Activated T-helper 1 cell treated with anti-CD3 and anti-CD28 coated beads, Interleukin-12 subunit alpha, Interleukin-12 subunit beta, Interleukin-2, Interleukin-4 antibody, amounts not matched to agents 30 ng/mL and 10 ng/mL and 1 ng/mL, durations not matched to agents 14 hours and 24 hours and 36 hours (primary cell): ENCODE measurements at regions of chr5 and their contacts with region 1.

Region 1: DNA sequence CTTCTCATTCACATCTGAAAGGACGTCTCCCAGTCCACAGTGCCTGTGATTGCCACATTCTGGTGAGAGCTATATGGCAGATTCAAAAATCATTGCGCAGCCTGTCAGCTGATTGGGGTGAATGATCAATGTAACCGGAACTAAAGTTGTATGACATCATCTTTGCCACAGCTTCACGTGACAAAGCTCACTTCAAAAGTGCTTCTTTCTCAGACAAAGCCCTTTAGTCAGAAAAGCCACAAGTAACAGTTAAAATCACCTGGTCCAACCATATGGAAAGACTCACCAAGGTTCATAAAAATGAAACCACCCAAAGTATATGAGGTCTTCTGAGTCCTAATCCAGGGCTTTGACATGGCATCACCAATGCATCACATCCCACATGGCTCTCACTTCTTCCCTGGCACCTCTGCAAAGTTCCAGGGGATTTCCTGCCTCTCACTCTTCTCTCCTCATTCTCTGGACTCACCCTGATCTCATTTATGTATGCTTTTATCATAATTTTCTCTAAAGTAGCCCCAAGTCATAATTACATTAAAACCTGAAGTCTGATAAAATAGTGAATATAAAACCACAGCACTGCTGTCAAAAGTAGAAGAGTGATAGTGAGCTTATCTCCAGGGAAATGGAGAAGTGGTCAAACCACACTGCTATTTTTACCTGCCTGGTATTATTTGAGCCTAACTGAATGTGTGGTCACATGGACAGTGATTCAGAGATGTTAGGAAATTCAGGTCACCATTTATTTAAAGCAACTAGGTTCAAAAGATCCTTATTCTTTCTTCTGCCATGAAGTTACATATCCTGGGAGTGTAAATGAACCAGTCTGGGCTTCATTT is 193.1 kb upstream of the PTGER4 start:
- DNase-seq: peak; percentile 63
- H3K4me3 Mint-ChIP-seq: peak overlapping the region; percentile 23
- H3K27ac Mint-ChIP-seq: peak overlapping the region; percentile 83
- H3K4me1 Mint-ChIP-seq: peaks cover 79% of the 10 kb centered on the region
- H3K27me3 Mint-ChIP-seq: no peaks in the 10 kb centered on the region

Region 2: GRCh38 chr5:39177631-39177964 is 1309.1 kb before region 1 on chr5:
- intact Hi-C with region 1: loop called (anchors 10 kb)
- DNase-seq: no peak
- H3K4me3 Mint-ChIP-seq: peak overlapping the region; percentile 78
- H3K27ac Mint-ChIP-seq: peak overlapping the region; percentile 77
- H3K4me1 Mint-ChIP-seq: peaks cover 89% of the 10 kb centered on the region
- H3K27me3 Mint-ChIP-seq: no peaks in the 10 kb centered on the region

Region 3: GRCh38 chr5:40171971-40172370 is 314.7 kb before region 1 on chr5:
- intact Hi-C with region 1: loop called (anchors 5 kb)
- DNase-seq: no peak
- H3K4me3 Mint-ChIP-seq: no peak overlapping the region
- H3K27ac Mint-ChIP-seq: no peak overlapping the region
- H3K4me1 Mint-ChIP-seq: peaks cover 8% of the 10 kb centered on the region
- H3K27me3 Mint-ChIP-seq: no peaks in the 10 kb centered on the region

Region 4: DNA sequence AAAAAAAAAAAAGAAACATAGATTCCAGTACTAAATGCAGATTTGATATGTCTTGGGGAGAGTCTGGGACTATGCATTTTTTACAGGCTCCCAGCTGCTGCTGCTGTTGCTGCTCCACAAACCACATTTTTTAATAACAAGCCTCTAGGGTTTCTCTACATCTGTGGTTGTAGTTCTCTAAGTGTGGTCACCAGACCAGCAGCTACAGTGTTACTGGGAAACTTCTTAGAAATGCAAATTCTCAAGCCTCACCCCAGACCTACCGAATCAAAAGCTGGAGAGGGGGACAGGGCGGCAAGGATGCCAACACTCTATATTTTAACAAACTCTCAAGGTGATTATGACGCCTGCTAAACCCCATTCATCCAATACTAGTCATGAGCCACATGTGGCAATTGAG is 100.4 kb before region 1 on chr5:
- intact Hi-C with region 1: loop called (anchors 1 kb)
- DNase-seq: peak; percentile 19
- H3K4me3 Mint-ChIP-seq: no peak overlapping the region
- H3K27ac Mint-ChIP-seq: peak overlapping the region; percentile 19
- H3K4me1 Mint-ChIP-seq: peaks cover 88% of the 10 kb centered on the region
- H3K27me3 Mint-ChIP-seq: no peaks in the 10 kb centered on the region

Region 5: DNA sequence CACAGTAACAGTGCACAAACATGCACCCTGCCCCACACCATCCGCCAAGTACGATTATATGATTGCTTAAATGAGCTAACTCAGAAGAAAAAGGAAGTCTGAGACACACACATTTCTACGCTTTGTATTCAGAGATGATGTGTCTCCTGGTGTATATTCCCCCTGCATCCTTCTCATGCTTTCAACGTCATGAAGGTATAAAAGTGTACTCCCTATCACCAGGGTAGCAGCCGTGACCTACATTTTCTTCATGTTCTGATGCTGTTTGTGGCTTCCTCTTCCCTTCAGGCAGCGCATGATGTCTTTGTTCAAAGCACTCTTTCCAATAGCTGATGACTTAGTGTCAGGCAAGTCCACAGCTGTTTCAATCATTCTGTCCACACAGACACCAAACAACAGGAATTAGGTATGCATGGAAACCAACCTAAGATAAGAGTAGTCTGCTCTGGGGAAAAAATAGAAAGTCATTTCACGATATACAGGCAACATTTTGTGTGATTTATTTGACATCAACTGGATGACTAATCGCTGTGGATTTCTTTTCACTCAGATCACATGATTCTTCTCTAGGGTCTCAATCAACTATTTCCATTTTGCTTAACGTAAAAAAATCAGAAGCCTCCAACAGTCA is 76.3 kb before region 1 on chr5:
- intact Hi-C with region 1: loop called (anchors 1 kb)
- DNase-seq: peak; percentile 76
- H3K4me3 Mint-ChIP-seq: peak overlapping the region; percentile 72
- H3K27ac Mint-ChIP-seq: peak overlapping the region; percentile 95
- H3K4me1 Mint-ChIP-seq: peaks cover 70% of the 10 kb centered on the region
- H3K27me3 Mint-ChIP-seq: no peaks in the 10 kb centered on the region

Region 6: DNA sequence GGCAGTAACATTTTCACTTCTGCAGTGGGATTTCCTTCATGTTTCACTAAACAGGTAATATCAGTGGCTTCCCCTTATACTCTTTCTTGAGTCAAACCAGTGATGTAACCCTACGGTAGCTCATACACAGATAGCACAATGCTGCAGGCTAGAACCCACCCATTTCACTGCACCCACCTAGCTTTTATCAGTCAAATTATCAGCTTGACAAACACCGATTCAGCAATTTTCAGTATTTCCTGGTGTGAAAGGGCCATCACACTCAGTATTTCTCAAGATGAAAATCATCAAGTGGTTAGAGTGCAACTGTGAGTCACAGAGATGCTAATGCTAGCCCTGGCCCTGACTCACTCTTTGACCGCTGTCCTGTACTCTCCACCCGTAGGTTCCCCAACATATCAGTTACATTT is 49.2 kb before region 1 on chr5:
- intact Hi-C with region 1: loop called (anchors 1 kb)
- DNase-seq: no peak
- H3K4me3 Mint-ChIP-seq: peak overlapping the region; percentile 13
- H3K27ac Mint-ChIP-seq: peak overlapping the region; percentile 71
- H3K4me1 Mint-ChIP-seq: peaks cover 84% of the 10 kb centered on the region
- H3K27me3 Mint-ChIP-seq: no peaks in the 10 kb centered on the region

Region 7: GRCh38 chr5:40475561-40475960 is 11.1 kb before region 1 on chr5:
- intact Hi-C with region 1: no loop called
- DNase-seq: no peak
- H3K4me3 Mint-ChIP-seq: no peak overlapping the region
- H3K27ac Mint-ChIP-seq: no peak overlapping the region
- H3K4me1 Mint-ChIP-seq: peaks cover 9% of the 10 kb centered on the region
- H3K27me3 Mint-ChIP-seq: peaks cover 2% of the 10 kb centered on the region

Region 8: DNA sequence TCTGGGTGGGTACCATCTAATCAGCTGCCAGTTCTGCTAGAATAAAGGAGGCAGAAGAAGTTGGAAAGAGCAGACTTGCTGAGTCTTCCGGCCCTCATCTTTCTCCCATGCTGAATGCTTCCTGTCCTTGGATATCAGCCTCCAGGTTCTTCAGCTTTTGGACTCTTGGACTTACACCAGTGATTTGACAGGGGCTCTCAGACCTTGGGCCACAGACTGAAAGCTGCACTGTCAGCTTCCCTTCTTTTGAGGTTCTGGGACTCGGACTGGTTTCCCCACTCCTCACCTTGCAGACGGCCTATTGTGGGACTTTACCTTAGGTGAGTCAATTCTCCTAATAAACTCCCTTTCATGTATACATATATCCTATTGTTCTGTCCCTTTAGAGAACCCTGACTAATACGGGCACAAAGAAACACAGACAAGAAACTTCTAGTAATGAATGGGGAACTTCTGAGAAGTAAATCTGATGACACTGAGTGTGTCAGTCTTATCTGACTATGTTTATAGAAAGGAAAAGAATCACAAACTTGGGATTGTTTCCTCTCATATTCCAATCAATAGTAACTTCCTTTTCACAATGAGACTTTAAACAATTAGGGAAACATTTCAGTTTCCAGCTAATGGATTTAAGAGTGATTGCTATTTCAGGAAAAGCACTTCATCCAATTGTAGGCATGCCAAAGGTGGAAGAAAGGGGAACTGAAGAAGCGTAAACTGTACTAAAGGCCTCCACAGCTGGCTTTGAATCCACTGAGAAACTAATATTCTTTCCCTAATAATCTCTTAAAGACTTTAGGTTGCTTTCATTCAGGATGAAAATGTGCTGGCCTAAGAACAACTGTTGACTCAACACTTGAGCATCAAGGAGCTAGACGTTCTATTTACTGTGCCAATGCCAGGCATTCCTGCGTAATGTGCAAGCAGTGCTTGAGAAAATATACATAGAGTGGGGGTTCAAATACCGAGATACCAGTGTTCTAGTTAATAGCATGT is 65.1 kb after region 1 on chr5:
- intact Hi-C with region 1: no loop called
- DNase-seq: no peak
- H3K4me3 Mint-ChIP-seq: no peak overlapping the region
- H3K27ac Mint-ChIP-seq: no peak overlapping the region
- H3K4me1 Mint-ChIP-seq: peaks cover 15% of the 10 kb centered on the region
- H3K27me3 Mint-ChIP-seq: no peaks in the 10 kb centered on the region

Region 9: GRCh38 chr5:40679155-40679913 is 192.7 kb after region 1 on chr5:
- intact Hi-C with region 1: loop called (anchors 1 kb)
- DNase-seq: peak; percentile 91
- H3K4me3 Mint-ChIP-seq: peak overlapping the region; percentile 99
- H3K27ac Mint-ChIP-seq: peak overlapping the region; percentile 99
- H3K4me1 Mint-ChIP-seq: peaks cover 66% of the 10 kb centered on the region
- H3K27me3 Mint-ChIP-seq: no peaks in the 10 kb centered on the region